Activated CD8-positive, alpha-beta T cell treated with anti-CD3 and anti-CD28 coated beads, Interleukin-2, amount 10 ng/mL, durations not matched to agents 7 days and 5 days (primary cell): ENCODE measurements at regions of chr2 and their contacts with region 1.

Region 1: GRCh38 chr2:135709992-135710391 is 31.7 kb upstream of the UBXN4 start:
- DNase-seq: peak; percentile 80
- ATAC-seq: peak; percentile 76
- H3K4me3 Mint-ChIP-seq: no peak overlapping the region
- H3K27ac Mint-ChIP-seq: no peak overlapping the region
- H3K4me1 Mint-ChIP-seq: no peaks in the 10 kb centered on the region
- H3K27me3 Mint-ChIP-seq: no peaks in the 10 kb centered on the region

Region 2: GRCh38 chr2:134988994-134989605 is 720.9 kb before region 1 on chr2:
- CTCF ChIA-PET with region 1: interaction called, 21 read pairs
- POLR2A ChIA-PET with region 1: no interaction called
- DNase-seq: no peak
- ATAC-seq: no peak
- H3K4me3 Mint-ChIP-seq: no peak overlapping the region
- H3K27ac Mint-ChIP-seq: no peak overlapping the region
- H3K4me1 Mint-ChIP-seq: peaks cover under 1% of the 10 kb centered on the region
- H3K27me3 Mint-ChIP-seq: peaks cover 10% of the 10 kb centered on the region

Region 3: GRCh38 chr2:135473567-135473966 is 236.4 kb before region 1 on chr2:
- CTCF ChIA-PET with region 1: interaction called, 30 read pairs
- POLR2A ChIA-PET with region 1: no interaction called
- DNase-seq: peak; percentile 46
- ATAC-seq: no peak
- H3K4me3 Mint-ChIP-seq: no peak overlapping the region
- H3K27ac Mint-ChIP-seq: no peak overlapping the region
- H3K4me1 Mint-ChIP-seq: no peaks in the 10 kb centered on the region
- H3K27me3 Mint-ChIP-seq: no peaks in the 10 kb centered on the region

Region 4: DNA sequence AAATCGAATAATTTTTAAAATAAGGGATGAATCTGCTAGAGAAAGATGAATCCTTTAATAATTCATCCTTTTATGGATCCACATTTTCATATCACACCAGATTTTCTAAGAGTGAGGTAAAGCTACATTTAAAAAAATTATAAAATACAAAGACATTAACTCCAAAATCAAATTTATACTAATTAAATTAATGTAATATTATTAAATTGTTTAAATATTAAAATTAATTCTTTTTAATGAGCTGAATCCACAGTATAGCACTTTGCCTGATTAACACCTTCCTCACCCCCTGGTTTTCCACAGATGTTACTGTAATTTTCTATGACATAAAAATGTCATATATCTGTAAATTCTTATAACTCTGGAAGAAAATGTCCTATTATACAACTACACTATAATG is 205.2 kb before region 1 on chr2:
- CTCF ChIA-PET with region 1: no interaction called
- POLR2A ChIA-PET with region 1: no interaction called
- DNase-seq: no peak
- ATAC-seq: no peak
- H3K4me3 Mint-ChIP-seq: no peak overlapping the region
- H3K27ac Mint-ChIP-seq: no peak overlapping the region
- H3K4me1 Mint-ChIP-seq: no peaks in the 10 kb centered on the region
- H3K27me3 Mint-ChIP-seq: no peaks in the 10 kb centered on the region

Region 5: GRCh38 chr2:135617501-135618015 is 92.4 kb before region 1 on chr2:
- CTCF ChIA-PET with region 1: no interaction called
- POLR2A ChIA-PET with region 1: no interaction called
- DNase-seq: no peak
- ATAC-seq: no peak
- H3K4me3 Mint-ChIP-seq: no peak overlapping the region
- H3K27ac Mint-ChIP-seq: no peak overlapping the region
- H3K4me1 Mint-ChIP-seq: no peaks in the 10 kb centered on the region
- H3K27me3 Mint-ChIP-seq: no peaks in the 10 kb centered on the region

Region 6: GRCh38 chr2:135647836-135648559 is 62.0 kb before region 1 on chr2:
- CTCF ChIA-PET with region 1: interaction called, 17 read pairs
- POLR2A ChIA-PET with region 1: no interaction called
- DNase-seq: no peak
- ATAC-seq: no peak
- H3K4me3 Mint-ChIP-seq: no peak overlapping the region
- H3K27ac Mint-ChIP-seq: no peak overlapping the region
- H3K4me1 Mint-ChIP-seq: peaks cover 19% of the 10 kb centered on the region
- H3K27me3 Mint-ChIP-seq: no peaks in the 10 kb centered on the region

Region 7: GRCh38 chr2:135728064-135728743 is 18.2 kb after region 1 on chr2:
- CTCF ChIA-PET with region 1: interaction called, 10 read pairs
- POLR2A ChIA-PET with region 1: no interaction called
- DNase-seq: no peak
- ATAC-seq: no peak
- H3K4me3 Mint-ChIP-seq: no peak overlapping the region
- H3K27ac Mint-ChIP-seq: no peak overlapping the region
- H3K4me1 Mint-ChIP-seq: peaks cover 9% of the 10 kb centered on the region
- H3K27me3 Mint-ChIP-seq: no peaks in the 10 kb centered on the region